ENCODE measurements at regions of chr4 and their contacts with region 1.

Region 1: GRCh38 chr4:17657090-17657489 is 42.6 kb downstream of the MED28 start:
- DNase-seq: no peak
- ATAC-seq: no peak
- H3K4me3 ChIP-seq: no peak overlapping the region
- H3K27ac ChIP-seq: no peak overlapping the region
- H3K4me1 ChIP-seq: no peaks in the 10 kb centered on the region
- H3K27me3 ChIP-seq: no peaks in the 10 kb centered on the region
- CTCF ChIP-seq: no peak

Region 2: GRCh38 chr4:17523662-17524061 is 133.4 kb before region 1 on chr4:
- CTCF ChIA-PET with region 1: no interaction called
- POLR2A ChIA-PET with region 1: no interaction called
- in situ Hi-C with region 1: no loop called
- intact Hi-C with region 1: no loop called
- DNase-seq: no peak
- ATAC-seq: no peak
- H3K4me3 ChIP-seq: no peak overlapping the region
- H3K27ac ChIP-seq: no peak overlapping the region
- H3K4me1 ChIP-seq: no peaks in the 10 kb centered on the region
- H3K27me3 ChIP-seq: no peaks in the 10 kb centered on the region
- CTCF ChIP-seq: no peak

Region 3: GRCh38 chr4:17614416-17615299 is 42.4 kb before region 1 on chr4 and contains the start of gene MED28:
- CTCF ChIA-PET with region 1: no interaction called
- POLR2A ChIA-PET with region 1: interaction called, 23 read pairs
- in situ Hi-C with region 1: no loop called
- intact Hi-C with region 1: no loop called
- DNase-seq: peak; percentile 32
- ATAC-seq: peak; percentile 96
- H3K4me3 ChIP-seq: peak within 1 kb of the TSS; percentile 97
- H3K27ac ChIP-seq: peak within 1 kb of the TSS; percentile 97
- H3K4me1 ChIP-seq: no peaks in the 10 kb centered on the region
- H3K27me3 ChIP-seq: no peaks in the 10 kb centered on the region
- CTCF ChIP-seq: no peak
- total RNA-seq, gene MED28: 32.1 TPM

Region 4: GRCh38 chr4:17630228-17630627 is 26.9 kb before region 1 on chr4:
- CTCF ChIA-PET with region 1: no interaction called
- POLR2A ChIA-PET with region 1: no interaction called
- in situ Hi-C with region 1: no loop called
- intact Hi-C with region 1: no loop called
- DNase-seq: no peak
- ATAC-seq: no peak
- H3K4me3 ChIP-seq: no peak overlapping the region
- H3K27ac ChIP-seq: no peak overlapping the region
- H3K4me1 ChIP-seq: no peaks in the 10 kb centered on the region
- H3K27me3 ChIP-seq: no peaks in the 10 kb centered on the region
- CTCF ChIP-seq: no peak

Region 5: GRCh38 chr4:17646693-17647092 is 10.4 kb before region 1 on chr4:
- CTCF ChIA-PET with region 1: no interaction called
- POLR2A ChIA-PET with region 1: no interaction called
- in situ Hi-C with region 1: no loop called
- intact Hi-C with region 1: no loop called
- DNase-seq: no peak
- ATAC-seq: no peak
- H3K4me3 ChIP-seq: no peak overlapping the region
- H3K27ac ChIP-seq: no peak overlapping the region
- H3K4me1 ChIP-seq: no peaks in the 10 kb centered on the region
- H3K27me3 ChIP-seq: no peaks in the 10 kb centered on the region
- CTCF ChIP-seq: no peak

Region 6: DNA sequence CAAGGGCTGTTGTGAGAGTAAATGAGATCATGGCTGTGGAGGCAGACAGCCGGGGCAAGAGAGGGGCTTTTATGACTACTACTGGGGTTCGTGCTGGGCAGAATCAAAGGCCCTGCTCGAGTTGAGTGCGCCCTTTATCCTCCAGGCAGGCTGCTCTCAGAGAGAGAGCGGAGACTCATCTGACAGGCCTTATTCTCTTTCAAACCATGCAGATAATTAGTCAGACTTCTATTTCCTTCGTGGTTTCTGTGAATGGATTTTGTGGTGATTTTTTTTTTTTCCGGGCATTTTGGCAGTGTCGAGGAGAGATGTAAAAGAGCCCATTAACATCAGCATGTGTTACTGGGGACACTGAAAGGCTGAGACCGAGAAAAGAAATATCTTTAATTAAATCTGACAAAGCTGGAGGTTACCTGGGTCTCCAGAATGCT is 30.9 kb after region 1 on chr4:
- CTCF ChIA-PET with region 1: no interaction called
- POLR2A ChIA-PET with region 1: no interaction called
- in situ Hi-C with region 1: no loop called
- intact Hi-C with region 1: no loop called
- DNase-seq: no peak
- ATAC-seq: no peak
- H3K4me3 ChIP-seq: no peak overlapping the region
- H3K27ac ChIP-seq: no peak overlapping the region
- H3K4me1 ChIP-seq: no peaks in the 10 kb centered on the region
- H3K27me3 ChIP-seq: no peaks in the 10 kb centered on the region
- CTCF ChIP-seq: no peak